Heart left ventricle (tissue), 16 donors: ENCODE measurements at regions of chr3 and their contacts with region 1.

Region 1: GRCh38 chr3:190076601-190077396 is 43.9 kb downstream of the P3H2 start:
- DNase-seq: peak in 2 of 5 donors; percentile 21 to 28
- ATAC-seq: peak; percentile 53 to 85 (median 67)
- H3K4me3 ChIP-seq: no peak overlapping the region
- H3K27ac ChIP-seq: peak overlapping the region in 3 of 12 donors; percentile 9 to 55 (median 48)
- H3K4me1 ChIP-seq: peaks cover 0 to 25% (median 1%) of the 10 kb centered on the region in 12 donors
- H3K27me3 ChIP-seq: no peaks in the 10 kb centered on the region
- CTCF ChIP-seq: no peak
- POLR2A ChIP-seq: no peak

Region 2: GRCh38 chr3:190024912-190025311 is 51.9 kb before region 1 on chr3:
- intact Hi-C with region 1: loop called in 1 of 10 experiments (anchors 5 kb)
- DNase-seq: no peak
- ATAC-seq: no peak
- H3K4me3 ChIP-seq: no peak overlapping the region
- H3K27ac ChIP-seq: no peak overlapping the region
- H3K4me1 ChIP-seq: peaks cover 0 to 7% (median 0%) of the 10 kb centered on the region in 12 donors
- H3K27me3 ChIP-seq: no peaks in the 10 kb centered on the region
- CTCF ChIP-seq: no peak
- POLR2A ChIP-seq: no peak

Region 3: GRCh38 chr3:190131329-190131728 is 54.5 kb after region 1 on chr3:
- intact Hi-C with region 1: loop called in 1 of 10 experiments (anchors 10 kb)
- DNase-seq: no peak
- ATAC-seq: no peak
- H3K4me3 ChIP-seq: no peak overlapping the region
- H3K27ac ChIP-seq: no peak overlapping the region
- H3K4me1 ChIP-seq: peaks cover 0 to 17% (median 0%) of the 10 kb centered on the region in 12 donors
- H3K27me3 ChIP-seq: peaks cover 0 to 5% (median 0%) of the 10 kb centered on the region in 9 donors
- CTCF ChIP-seq: no peak
- POLR2A ChIP-seq: no peak

Region 4: DNA sequence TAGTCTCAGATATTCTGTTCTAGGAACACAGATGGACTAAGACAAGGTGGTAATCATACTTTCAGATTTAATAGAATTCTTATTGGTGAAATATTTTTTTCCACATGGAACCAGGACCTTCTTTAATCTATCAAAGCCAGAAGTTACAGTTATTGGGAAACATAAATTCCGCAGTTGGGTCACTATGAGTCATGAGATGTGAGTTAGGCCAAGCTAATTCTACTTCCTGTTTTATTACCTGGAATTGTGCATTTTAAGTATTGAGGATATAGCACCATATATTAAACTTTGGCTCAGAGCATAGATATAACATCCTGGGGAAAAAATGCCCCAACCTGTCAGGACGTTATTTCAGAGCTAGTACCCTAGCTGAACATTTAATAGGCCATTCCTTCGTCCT is 140.3 kb after region 1 on chr3:
- intact Hi-C with region 1: no loop called
- DNase-seq: no peak
- ATAC-seq: no peak
- H3K4me3 ChIP-seq: no peak overlapping the region
- H3K27ac ChIP-seq: no peak overlapping the region
- H3K4me1 ChIP-seq: peaks cover 0 to 6% (median 0%) of the 10 kb centered on the region in 12 donors
- H3K27me3 ChIP-seq: no peaks in the 10 kb centered on the region
- CTCF ChIP-seq: no peak
- POLR2A ChIP-seq: no peak